ENCODE measurements at regions of chr5 and their contacts with region 1.

Region 1: DNA sequence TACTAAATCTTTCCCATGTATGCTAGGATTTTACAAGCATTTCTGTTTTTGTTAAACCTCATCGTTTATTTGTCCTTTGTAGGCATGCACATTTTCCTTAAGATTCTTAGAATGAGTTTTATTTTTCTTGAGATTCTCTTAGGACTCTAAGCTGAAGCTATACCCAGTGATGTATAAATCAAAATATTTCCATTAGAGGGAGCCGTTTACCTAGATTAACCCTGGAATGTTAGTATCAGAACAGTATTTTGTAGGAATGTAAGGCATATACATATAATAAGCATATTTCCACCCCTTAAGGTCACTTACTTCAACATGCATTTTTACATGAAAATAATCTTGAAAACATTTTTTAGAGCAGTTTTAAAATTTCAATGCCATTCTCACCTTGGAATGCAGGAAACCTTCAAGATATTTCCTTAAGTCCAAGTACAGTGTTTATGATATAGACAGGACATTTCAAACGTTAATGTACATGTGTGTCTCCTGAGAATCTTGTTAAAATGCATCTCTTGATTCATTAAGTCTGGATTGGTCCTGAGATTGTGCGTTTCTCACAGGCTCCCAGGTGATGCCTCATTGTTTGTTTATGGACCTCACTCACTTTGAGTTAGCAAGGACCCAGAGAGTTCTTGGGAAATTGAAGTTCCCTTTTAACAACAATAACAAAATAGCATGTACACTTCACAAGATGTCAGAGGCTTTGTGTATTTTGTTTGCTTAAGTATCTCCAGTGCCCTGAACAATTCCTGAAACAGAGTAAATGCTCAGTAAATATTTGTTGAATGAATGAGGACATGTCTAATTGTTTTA is 34.9 kb upstream of the FCHO2 start:
- DNase-seq: peak; percentile 62
- H3K4me3 ChIP-seq: no peak overlapping the region
- H3K27ac ChIP-seq: no peak overlapping the region
- H3K4me1 ChIP-seq: no peaks in the 10 kb centered on the region
- H3K27me3 ChIP-seq: no peaks in the 10 kb centered on the region
- CTCF ChIP-seq: peak in 1 of 2 donors; percentile 5
- POLR2A ChIP-seq: no peak

Region 2: DNA sequence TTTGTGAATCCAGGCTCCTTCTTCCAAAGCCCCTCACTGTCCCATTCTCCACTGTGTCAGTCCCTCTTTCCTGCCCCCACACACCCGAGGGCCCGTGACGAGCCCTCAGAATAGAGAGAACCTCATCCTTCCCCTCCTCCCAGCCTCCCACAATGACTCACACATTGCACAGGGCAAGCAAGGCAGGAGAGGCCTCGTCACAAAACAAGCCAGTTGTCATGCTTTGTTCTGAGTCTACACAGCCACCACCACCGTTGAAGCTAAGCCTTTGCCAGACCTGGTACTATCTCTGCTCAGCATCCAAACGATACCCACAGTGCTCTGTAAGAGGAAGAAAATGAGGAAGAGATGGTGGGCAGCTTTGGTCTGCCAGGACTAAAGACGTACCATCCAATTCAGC is 271.4 kb before region 1 on chr5:
- CTCF ChIA-PET with region 1: no interaction called
- POLR2A ChIA-PET with region 1: no interaction called
- dilution Hi-C with region 1: no loop called
- intact Hi-C with region 1: no loop called
- DNase-seq: no peak
- H3K4me3 ChIP-seq: no peak overlapping the region
- H3K27ac ChIP-seq: no peak overlapping the region
- H3K4me1 ChIP-seq: no peaks in the 10 kb centered on the region
- H3K27me3 ChIP-seq: no peaks in the 10 kb centered on the region
- CTCF ChIP-seq: no peak
- POLR2A ChIP-seq: no peak

Region 3: DNA sequence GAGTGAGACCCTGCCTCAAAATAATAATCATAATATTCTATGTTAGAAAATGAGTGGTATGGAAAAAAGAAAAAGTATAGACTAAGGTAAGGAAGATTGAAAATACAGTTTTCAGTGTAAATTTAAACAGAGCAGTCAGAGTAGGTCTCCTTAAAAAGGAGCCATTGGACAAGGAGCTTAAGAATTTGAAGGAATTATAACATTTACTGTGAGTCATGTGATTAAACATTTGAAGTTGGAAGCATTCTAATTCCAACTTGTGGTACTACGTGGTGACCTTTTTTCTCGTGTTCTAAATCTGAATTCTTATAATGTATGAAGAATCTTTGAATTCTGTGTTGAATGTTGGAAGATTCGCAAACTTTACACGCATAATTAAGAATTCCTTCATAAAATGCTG is 160.2 kb after region 1 on chr5:
- CTCF ChIA-PET with region 1: no interaction called
- POLR2A ChIA-PET with region 1: no interaction called
- dilution Hi-C with region 1: no loop called
- intact Hi-C with region 1: loop called (anchors 5 kb)
- DNase-seq: no peak
- H3K4me3 ChIP-seq: no peak overlapping the region
- H3K27ac ChIP-seq: no peak overlapping the region
- H3K4me1 ChIP-seq: no peaks in the 10 kb centered on the region
- H3K27me3 ChIP-seq: no peaks in the 10 kb centered on the region
- CTCF ChIP-seq: no peak
- POLR2A ChIP-seq: no peak

Region 4: DNA sequence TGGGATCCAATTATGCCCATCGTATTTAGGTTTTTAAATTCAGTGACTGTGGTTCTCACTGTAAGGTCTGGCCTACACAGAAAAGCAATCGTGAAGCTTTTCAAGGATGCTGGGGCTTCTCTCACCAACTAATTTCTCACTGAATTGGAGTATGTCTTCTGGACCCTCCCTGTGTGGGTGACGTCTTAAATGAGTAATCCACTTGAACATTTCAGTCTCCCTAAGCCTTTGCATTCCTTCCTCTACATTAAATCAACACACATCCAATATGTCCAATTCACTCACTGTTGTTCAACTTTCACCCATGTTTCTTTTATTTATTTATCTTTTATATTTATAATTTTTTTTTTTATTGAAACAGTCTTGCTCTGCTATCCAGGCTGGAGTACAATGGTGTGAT is 564.8 kb after region 1 on chr5:
- CTCF ChIA-PET with region 1: no interaction called
- POLR2A ChIA-PET with region 1: no interaction called
- dilution Hi-C with region 1: no loop called
- intact Hi-C with region 1: no loop called
- DNase-seq: no peak
- H3K4me3 ChIP-seq: no peak overlapping the region
- H3K27ac ChIP-seq: no peak overlapping the region
- H3K4me1 ChIP-seq: no peaks in the 10 kb centered on the region
- H3K27me3 ChIP-seq: peaks cover 39 to 52% of the 10 kb centered on the region in 2 experiments
- CTCF ChIP-seq: no peak
- POLR2A ChIP-seq: no peak

Measured in endothelial cell of umbilical vein (primary cell).